ENCODE measurements at regions of chr11 and their contacts with region 1.

Region 1: DNA sequence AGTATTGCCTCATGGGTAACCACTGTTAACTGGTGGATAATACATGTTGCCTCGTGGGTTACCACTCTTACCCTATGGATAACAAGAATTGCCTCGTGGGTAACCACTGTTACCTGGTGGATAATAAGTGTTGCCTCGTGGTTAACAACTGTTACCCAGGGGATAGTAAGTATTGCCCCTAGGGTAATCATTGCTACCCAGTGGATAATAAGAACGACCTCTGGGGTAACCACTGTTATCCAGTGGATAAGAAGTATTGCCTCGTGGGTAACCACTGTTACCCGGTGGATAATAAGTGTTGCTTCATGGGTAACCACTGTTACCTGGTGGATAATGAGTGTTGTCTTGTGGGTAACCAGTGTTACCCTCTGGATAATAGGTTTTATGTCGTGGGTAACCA is 28.1 kb upstream of the NXPE4 start:
- DNase-seq: no peak
- H3K4me3 ChIP-seq: no peak overlapping the region
- H3K4me3 Mint-ChIP-seq: no peak overlapping the region
- H3K27ac Mint-ChIP-seq: no peak overlapping the region
- H3K4me1 ChIP-seq: no peaks in the 10 kb centered on the region
- H3K4me1 Mint-ChIP-seq: no peaks in the 10 kb centered on the region
- H3K27me3 ChIP-seq: no peaks in the 10 kb centered on the region
- H3K27me3 Mint-ChIP-seq: no peaks in the 10 kb centered on the region
- CTCF ChIP-seq: no peak

Region 2: GRCh38 chr11:114650661-114651060 is 26.9 kb after region 1 on chr11:
- CTCF ChIA-PET with region 1: no interaction called
- POLR2A ChIA-PET with region 1: no interaction called
- intact Hi-C with region 1: loop called (anchors 2 kb)
- DNase-seq: no peak
- H3K4me3 ChIP-seq: no peak overlapping the region
- H3K4me3 Mint-ChIP-seq: no peak overlapping the region
- H3K27ac Mint-ChIP-seq: no peak overlapping the region
- H3K4me1 ChIP-seq: no peaks in the 10 kb centered on the region
- H3K4me1 Mint-ChIP-seq: peaks cover 4% of the 10 kb centered on the region
- H3K27me3 ChIP-seq: 0 out of 2 replicates have a peak, but pooled peaks cover 1% of the 10 kb centered on the region
- H3K27me3 Mint-ChIP-seq: no peaks in the 10 kb centered on the region
- CTCF ChIP-seq: no peak

Region 3: GRCh38 chr11:114736806-114737205 is 113.1 kb after region 1 on chr11:
- CTCF ChIA-PET with region 1: no interaction called
- POLR2A ChIA-PET with region 1: no interaction called
- intact Hi-C with region 1: no loop called
- DNase-seq: no peak
- H3K4me3 ChIP-seq: no peak overlapping the region
- H3K4me3 Mint-ChIP-seq: no peak overlapping the region
- H3K27ac Mint-ChIP-seq: no peak overlapping the region
- H3K4me1 ChIP-seq: no peaks in the 10 kb centered on the region
- H3K4me1 Mint-ChIP-seq: no peaks in the 10 kb centered on the region
- H3K27me3 ChIP-seq: no peaks in the 10 kb centered on the region
- H3K27me3 Mint-ChIP-seq: peaks cover 20% of the 10 kb centered on the region
- CTCF ChIP-seq: no peak